ENCODE measurements at regions of chr7 and their contacts with region 1.

Region 1: GRCh38 chr7:129635300-129636029 is 23.9 kb downstream of the NRF1 start:
- DNase-seq: peak in 4 of 5 donors; percentile 43 to 62 (median 44)
- ATAC-seq: peak; percentile 69 to 87 (median 77)
- H3K4me3 ChIP-seq: no peak overlapping the region
- H3K27ac ChIP-seq: no peak overlapping the region
- H3K4me1 ChIP-seq: peaks cover 0 to 27% (median 5%) of the 10 kb centered on the region in 12 donors
- H3K27me3 ChIP-seq: no peaks in the 10 kb centered on the region
- CTCF ChIP-seq: peak; percentile 50 to 81 (median 74)
- POLR2A ChIP-seq: no peak

Region 2: GRCh38 chr7:129494041-129494440 is 141.4 kb before region 1 on chr7:
- intact Hi-C with region 1: loop called in 4 of 10 experiments (anchors 10 kb)
- DNase-seq: no peak
- ATAC-seq: no peak
- H3K4me3 ChIP-seq: no peak overlapping the region
- H3K27ac ChIP-seq: no peak overlapping the region
- H3K4me1 ChIP-seq: no peaks in the 10 kb centered on the region
- H3K27me3 ChIP-seq: no peaks in the 10 kb centered on the region
- CTCF ChIP-seq: no peak
- POLR2A ChIP-seq: no peak

Region 3: DNA sequence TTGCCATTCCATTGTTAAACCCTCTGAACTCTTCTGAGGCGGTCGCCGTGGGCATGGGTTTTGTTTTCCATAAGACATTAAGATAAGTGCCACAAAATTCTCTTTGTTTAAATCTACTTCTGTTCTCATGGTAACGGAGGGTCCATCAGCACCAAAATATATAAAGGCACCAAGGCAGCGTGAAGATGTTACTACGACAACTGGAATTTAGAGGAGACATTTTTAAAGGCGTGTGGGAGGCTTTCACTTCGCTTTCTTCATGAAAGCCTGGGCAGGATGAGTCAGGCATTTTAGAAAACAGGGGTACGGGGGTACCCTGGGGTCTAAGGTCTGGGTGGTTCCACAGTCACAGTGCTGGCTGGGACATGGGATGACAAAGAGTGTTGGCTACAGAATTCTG is 99.1 kb before region 1 on chr7:
- intact Hi-C with region 1: no loop called
- DNase-seq: no peak
- ATAC-seq: no peak
- H3K4me3 ChIP-seq: no peak overlapping the region
- H3K27ac ChIP-seq: peak overlapping the region in 1 of 12 donors; percentile 20
- H3K4me1 ChIP-seq: no peaks in the 10 kb centered on the region
- H3K27me3 ChIP-seq: no peaks in the 10 kb centered on the region
- CTCF ChIP-seq: no peak
- POLR2A ChIP-seq: no peak

Region 4: DNA sequence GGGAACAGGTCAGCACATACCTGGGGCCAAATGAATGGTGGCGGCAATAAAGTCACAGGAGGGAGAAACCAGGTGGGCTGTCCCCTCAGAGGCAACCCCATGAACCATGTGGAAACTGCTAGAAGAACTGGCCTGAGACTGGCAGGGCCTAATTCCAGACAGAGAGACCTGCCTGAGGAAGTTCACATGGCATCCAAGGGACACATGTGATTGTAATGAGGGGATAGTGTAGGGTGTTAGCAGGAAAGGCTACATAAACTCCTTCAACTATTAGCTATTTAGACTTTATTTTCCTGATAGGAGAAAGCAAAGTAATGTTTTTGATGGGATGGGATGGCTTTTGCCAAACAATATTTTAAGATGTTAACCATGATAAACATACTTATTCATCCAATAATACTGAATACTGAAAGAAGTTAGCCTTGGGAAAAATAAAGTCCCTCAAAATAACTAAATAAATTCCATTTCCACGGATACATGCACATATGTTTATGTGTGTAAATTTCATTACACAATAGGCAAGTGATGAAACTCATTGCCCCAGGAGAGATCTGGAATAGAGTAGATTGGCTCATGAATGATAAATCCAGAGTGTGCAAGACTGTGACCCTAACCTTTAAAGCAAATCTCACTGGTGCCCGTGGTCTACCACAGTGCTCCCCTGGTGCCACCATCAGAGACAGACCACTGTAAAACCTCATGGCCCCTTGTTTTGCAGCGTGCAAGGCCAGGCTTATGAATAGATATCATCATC is 113.1 kb after region 1 on chr7:
- intact Hi-C with region 1: no loop called
- DNase-seq: no peak
- ATAC-seq: no peak
- H3K4me3 ChIP-seq: no peak overlapping the region
- H3K27ac ChIP-seq: no peak overlapping the region
- H3K4me1 ChIP-seq: peaks cover 0 to 7% (median 0%) of the 10 kb centered on the region in 12 donors
- H3K27me3 ChIP-seq: no peaks in the 10 kb centered on the region
- CTCF ChIP-seq: no peak
- POLR2A ChIP-seq: no peak